Tibial artery (tissue), 4 donors: ENCODE measurements at regions of chr10 and their contacts with region 1.

Region 1: DNA sequence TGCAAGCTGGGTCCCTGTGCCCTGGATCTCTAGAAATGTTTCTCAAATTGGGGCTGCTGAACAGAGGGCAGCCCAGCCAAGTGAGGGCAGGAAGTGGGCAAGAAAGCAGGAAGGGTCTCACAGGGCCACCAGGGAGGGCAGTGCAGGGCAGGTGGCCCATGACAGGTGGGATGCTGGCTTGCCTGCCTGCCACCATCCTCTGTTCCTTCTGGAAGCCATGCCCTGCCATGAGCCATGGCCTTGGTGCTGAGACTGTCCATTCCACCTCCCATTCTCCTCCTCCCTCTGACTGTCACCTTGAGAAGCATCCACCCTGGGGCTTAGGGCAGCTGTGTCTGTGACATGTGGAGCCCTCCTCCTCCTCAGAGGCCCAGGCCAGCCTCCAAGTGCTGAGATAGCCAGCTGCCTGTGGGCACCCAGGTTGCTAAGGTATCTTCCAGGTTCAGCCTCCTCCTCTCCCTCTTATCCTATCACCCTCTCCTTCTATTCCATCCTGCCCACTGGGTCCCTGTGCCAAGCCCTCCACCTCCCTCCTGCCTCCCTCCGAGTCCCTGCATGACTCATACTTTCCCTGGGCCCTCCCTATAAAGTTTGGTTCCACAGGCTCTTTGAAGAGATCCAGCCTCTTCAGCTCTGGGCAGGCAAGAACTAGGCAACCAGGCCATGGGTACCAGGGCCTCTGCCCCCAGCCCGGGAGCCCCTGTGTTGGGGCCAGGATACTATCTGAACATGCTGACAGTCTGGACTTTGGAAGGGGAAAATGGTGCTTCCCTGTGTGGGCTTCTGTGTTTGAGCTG is 1.3 kb downstream of the VSIR start:
- DNase-seq: peak; percentile 84 to 93
- H3K4me3 ChIP-seq: peak overlapping the region; percentile 80 to 82
- H3K27ac ChIP-seq: peak overlapping the region; percentile 95 to 96
- H3K4me1 ChIP-seq: peaks cover 10 to 71% (median 62%) of the 10 kb centered on the region in 4 donors
- H3K27me3 ChIP-seq: no peaks in the 10 kb centered on the region
- CTCF ChIP-seq: no peak

Region 2: GRCh38 chr10:71713135-71714030 is 58.6 kb before region 1 on chr10:
- intact Hi-C with region 1: loop called (anchors 2 kb)
- DNase-seq: peak; percentile 92 to 97
- H3K4me3 ChIP-seq: peak overlapping the region in 1 of 2 donors; percentile 12
- H3K27ac ChIP-seq: peak overlapping the region; percentile 88 to 91
- H3K4me1 ChIP-seq: peaks cover 3 to 58% (median 49%) of the 10 kb centered on the region in 4 donors
- H3K27me3 ChIP-seq: no peaks in the 10 kb centered on the region
- CTCF ChIP-seq: peak in 1 of 2 experiments; percentile 12

Region 3: DNA sequence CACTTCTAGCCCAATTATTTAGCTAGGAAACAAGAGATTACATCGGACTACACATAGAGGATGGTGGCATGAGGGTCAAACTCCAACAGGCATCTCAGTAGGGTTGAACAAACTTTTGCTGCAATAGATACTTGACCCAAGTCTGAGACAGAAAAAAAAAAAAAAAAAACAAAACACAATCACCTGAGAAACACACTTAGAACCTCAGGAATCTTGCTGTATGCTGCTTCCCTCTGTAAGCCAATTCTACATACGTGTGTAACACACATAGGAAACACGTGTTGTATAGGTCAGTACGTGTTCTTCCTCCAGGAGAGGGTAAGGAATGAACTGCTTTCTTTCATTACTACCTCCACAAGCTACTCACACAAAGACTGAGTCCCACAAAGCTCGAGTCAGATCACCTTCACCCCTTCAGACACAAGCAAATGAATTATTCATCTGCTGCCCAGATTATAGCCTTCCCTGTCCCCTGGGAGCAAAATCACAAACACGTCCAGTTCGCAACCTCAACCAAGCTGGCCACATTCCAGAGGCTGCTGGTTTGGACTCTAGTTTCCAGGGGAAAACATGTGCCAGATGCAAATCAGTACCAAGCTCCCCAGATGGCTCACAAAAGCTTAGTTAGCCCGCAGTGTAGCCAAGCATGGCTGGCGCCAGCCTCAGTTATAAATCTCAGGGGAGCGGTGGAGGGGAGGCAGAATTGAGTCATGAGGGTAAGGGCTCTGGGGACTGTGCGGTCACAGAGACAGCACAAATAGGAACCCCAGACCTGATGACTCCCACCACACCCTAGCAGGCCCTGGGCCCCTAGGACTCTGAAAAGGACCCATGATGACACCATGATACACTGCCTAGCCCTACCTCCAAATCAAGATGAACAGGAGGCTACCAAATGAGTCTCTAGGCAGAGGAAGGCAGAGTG is 63.9 kb after region 1 on chr10:
- intact Hi-C with region 1: loop called (anchors 5 kb)
- DNase-seq: peak; percentile 87 to 96
- H3K4me3 ChIP-seq: no peak overlapping the region
- H3K27ac ChIP-seq: peak overlapping the region; percentile 85
- H3K4me1 ChIP-seq: peaks cover 0 to 72% (median 54%) of the 10 kb centered on the region in 4 donors
- H3K27me3 ChIP-seq: no peaks in the 10 kb centered on the region
- CTCF ChIP-seq: no peak

Region 4: DNA sequence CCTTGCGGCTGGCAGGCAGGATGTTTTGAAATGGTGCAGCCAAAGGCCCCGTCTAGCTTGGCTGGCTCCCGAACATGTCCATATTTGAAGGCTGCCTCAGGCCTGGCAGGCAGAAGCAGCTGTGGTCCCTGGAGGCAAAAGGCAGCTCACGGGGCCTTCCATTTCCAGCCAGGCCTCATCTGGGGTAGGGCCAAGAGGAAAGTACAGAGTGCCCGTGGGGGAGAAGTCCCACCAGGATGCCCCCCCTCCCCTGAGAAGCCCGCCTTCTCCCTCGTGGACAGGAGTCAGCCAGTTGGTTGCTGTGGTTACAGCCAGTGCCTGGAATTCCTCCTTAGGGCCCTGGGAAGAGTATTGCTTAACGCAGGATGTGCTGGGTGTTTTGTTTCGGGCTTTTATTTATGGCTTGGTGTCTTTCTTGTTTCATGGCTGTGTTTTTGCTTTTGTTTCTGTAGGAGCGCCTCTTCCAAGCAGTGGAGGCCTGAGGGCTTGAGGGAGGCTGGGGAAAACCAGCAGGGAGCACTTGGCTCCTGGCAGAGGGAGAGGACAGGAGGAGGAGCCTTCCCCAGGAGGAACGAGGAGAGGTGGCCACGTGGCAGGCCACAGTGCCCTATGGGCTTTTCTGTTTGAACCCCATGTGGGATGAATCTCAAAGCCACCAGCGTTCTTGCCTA is 237.5 kb after region 1 on chr10:
- intact Hi-C with region 1: no loop called
- DNase-seq: peak; percentile 96 to 100
- H3K4me3 ChIP-seq: peak overlapping the region in 1 of 2 donors; percentile 12
- H3K27ac ChIP-seq: peak overlapping the region; percentile 85 to 90
- H3K4me1 ChIP-seq: peaks cover 7 to 65% (median 36%) of the 10 kb centered on the region in 4 donors
- H3K27me3 ChIP-seq: no peaks in the 10 kb centered on the region
- CTCF ChIP-seq: no peak